Left cardiac atrium (tissue), 4 donors: ENCODE measurements at regions of chrX and their contacts with region 1.

Region 1: GRCh38 chrX:43654431-43655150 is 1.5 kb upstream of the MAOA start:
- DNase-seq: peak; percentile 92
- ATAC-seq: peak; percentile 99

Region 2: GRCh38 chrX:43211570-43211969 is 443.0 kb before region 1 on chrX:
- intact Hi-C with region 1: no loop called
- DNase-seq: no peak
- ATAC-seq: no peak

Region 3: GRCh38 chrX:43525901-43526610 is 128.5 kb before region 1 on chrX:
- intact Hi-C with region 1: no loop called
- DNase-seq: no peak
- ATAC-seq: no peak

Region 4: GRCh38 chrX:43707812-43708548 is 53.4 kb after region 1 on chrX:
- intact Hi-C with region 1: loop called in 1 of 2 experiments (anchors 2 kb)
- DNase-seq: peak; percentile 70
- ATAC-seq: peak; percentile 13 to 34

Region 5: DNA sequence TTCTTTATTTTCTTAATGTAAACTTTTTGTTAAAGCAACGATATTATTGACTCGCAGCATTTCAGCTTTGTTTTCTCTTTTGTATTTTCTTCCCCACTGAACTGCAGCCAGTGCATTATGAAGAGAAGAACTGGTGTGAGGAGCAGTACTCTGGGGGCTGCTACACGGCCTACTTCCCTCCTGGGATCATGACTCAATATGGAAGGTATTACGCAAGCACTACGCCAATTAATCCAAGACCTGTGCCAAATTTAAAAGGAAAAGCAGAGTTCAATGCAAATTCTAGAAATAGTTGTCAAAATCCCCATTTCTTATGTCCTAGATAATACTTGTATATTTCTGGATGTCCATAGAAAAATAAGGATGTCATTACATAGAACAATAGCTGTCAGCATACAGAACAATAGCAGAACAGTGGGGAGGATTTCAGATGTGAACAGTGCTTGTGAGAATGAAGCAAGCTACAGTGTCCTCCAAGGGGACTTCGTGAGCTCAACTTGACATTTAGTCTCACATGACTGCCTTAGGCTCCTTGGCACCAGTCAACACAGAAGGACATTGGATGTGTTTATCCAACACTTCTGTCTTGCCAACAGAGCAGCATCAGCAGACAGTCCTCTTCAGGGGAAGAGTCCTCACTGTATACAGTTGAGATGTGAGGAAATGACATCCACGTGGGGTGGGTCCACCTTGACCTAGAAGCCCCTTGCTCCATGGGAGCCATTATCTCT is 87.4 kb after region 1 on chrX:
- intact Hi-C with region 1: loop called in 1 of 2 experiments (anchors 2 kb)
- DNase-seq: peak; percentile 22
- ATAC-seq: peak; percentile 83 to 91

Region 6: GRCh38 chrX:43822015-43822414 is 167.4 kb after region 1 on chrX:
- intact Hi-C with region 1: no loop called
- DNase-seq: no peak
- ATAC-seq: peak in 1 of 2 donors; percentile 38